HCT116 (cell line): ENCODE measurements at regions of chr10 and their contacts with region 1.

Region 1: GRCh38 chr10:133307776-133308420 is 774 bp downstream of the TUBGCP2 start:
- DNase-seq: no peak
- ATAC-seq: peak; percentile 56
- H3K4me3 ChIP-seq: peak overlapping the region; percentile 78 to 89
- H3K27ac ChIP-seq: peak overlapping the region; percentile 86
- H3K4me1 ChIP-seq: peaks cover 2 to 15% of the 10 kb centered on the region in 2 experiments; a peak in 2 of 4 replicates
- H3K27me3 ChIP-seq: no peaks in the 10 kb centered on the region
- CTCF ChIP-seq: peak; percentile 53 to 68 (median 62); a peak in 5 of 6 replicates
- POLR2A ChIP-seq: no peak
- RAD21 ChIP-seq: no peak

Region 2: DNA sequence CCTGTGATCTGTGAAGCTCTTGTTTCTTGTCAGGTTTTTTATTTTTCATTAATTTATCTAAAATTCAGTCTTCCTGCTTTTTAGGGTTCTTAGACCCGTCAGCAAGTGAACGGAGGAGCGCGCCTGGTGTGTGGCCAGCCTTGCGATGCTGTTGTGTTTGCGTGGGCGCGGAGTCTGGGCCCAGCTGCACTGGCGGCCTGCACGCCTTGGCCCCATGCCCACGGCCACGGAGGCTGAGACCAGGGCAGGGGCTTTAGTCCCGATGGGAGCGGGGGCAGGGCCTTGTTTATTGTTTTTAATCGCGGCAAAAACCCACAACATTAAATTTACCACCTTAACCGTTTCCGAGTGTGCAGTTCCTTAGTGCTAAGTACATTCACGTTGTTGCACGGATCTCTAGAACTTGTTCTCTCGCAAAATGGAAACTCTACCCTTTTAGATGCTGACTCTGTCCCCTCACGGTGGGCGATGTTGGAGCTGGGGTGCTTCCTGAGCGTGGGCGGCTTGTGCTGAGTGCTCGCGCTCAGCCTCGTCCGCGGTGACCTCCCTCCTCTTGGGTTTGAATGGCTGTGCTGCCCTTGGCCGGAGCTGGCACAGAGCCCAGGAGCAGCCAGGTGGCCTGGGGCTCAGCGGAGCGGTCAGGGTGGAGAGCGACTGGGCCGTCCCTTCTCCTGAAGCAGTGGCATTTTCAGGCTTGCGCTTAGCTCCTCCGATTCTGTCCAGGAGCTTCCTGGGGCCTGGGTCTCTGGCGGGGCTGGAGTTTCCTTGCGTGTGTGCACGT is 701.2 kb before region 1 on chr10:
- CTCF ChIA-PET with region 1: no interaction called
- POLR2A ChIA-PET with region 1: no interaction called
- RAD21 ChIA-PET with region 1: no interaction called
- intact Hi-C with region 1: no loop called
- DNase-seq: no peak
- ATAC-seq: no peak
- H3K4me3 ChIP-seq: no peak overlapping the region
- H3K27ac ChIP-seq: no peak overlapping the region
- H3K4me1 ChIP-seq: peaks cover 0 to 14% of the 10 kb centered on the region in 2 experiments; a peak in 2 of 4 replicates
- H3K27me3 ChIP-seq: no peaks in the 10 kb centered on the region
- CTCF ChIP-seq: no peak
- POLR2A ChIP-seq: no peak
- RAD21 ChIP-seq: no peak

Region 3: DNA sequence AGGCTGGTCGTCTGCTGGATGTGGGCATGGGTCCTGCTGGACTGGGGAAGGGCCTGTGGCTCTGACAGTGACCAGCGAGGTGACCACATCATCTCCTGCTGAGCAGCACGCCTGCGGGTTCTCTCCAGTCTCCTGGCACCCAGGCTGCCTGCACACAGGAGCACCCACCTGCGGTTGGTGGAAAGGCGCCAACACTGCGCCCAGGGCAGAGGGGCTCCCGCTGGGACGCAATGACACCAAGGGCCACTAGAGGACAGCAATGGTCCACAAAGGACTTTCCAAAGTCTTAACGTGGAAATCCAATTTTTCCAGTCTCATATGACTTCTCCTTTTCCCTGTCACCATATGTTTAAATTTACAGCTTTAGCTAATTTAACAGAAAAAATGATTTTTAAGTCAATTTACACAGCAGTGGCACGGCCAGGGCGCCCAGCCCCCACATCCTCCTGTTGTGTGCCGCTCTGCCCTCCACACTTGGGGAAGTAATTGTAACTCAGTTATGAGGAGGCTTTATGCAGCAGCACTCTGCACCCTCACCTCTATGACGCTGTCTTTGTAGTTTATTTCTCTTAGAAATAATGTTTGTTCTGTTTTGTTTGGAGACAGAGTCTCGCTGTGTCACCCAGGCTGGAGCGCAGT is 403.6 kb before region 1 on chr10:
- CTCF ChIA-PET with region 1: no interaction called
- POLR2A ChIA-PET with region 1: no interaction called
- RAD21 ChIA-PET with region 1: no interaction called
- intact Hi-C with region 1: loop called (anchors 2 kb)
- DNase-seq: peak; percentile 29
- ATAC-seq: peak; percentile 85
- H3K4me3 ChIP-seq: no peak overlapping the region
- H3K27ac ChIP-seq: no peak overlapping the region
- H3K4me1 ChIP-seq: peaks cover 11 to 18% of the 10 kb centered on the region in 2 experiments; a peak in 3 of 4 replicates
- H3K27me3 ChIP-seq: no peaks in the 10 kb centered on the region
- CTCF ChIP-seq: peak; percentile 69 to 75 (median 71)
- POLR2A ChIP-seq: no peak
- RAD21 ChIP-seq: peak; percentile 80

Region 4: DNA sequence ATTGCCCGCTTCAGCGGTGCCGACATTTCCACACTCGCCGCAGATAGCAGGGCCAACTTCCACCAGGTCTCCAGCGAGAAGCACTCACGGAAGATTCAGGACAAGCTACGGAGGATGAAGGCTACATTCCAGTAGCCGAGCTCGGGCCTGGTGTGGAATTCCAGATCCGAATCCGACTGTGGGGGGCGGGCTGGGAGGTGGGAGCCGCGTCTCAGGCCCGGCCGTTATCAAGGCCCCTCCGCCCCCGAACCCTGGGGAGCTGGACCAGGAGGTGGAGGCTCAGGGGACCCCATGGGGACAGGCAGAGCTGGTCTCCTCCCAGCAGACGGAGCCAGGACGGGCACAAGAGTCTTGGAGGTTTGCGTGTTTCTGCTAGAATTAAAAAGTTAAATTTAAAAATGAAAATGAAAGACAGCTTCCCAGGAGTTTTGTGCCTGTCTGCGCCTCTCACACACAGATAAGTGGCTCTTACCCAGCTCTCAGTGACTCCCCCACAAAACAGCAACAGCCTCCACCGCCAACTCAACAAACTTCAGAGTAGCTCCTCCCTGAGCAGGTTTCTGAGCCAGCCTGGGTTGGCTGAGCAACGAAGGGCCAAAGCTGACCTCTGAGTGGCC is 83.0 kb before region 1 on chr10:
- CTCF ChIA-PET with region 1: no interaction called
- POLR2A ChIA-PET with region 1: no interaction called
- RAD21 ChIA-PET with region 1: no interaction called
- intact Hi-C with region 1: no loop called
- DNase-seq: no peak
- ATAC-seq: no peak
- H3K4me3 ChIP-seq: no peak overlapping the region
- H3K27ac ChIP-seq: no peak overlapping the region
- H3K4me1 ChIP-seq: no peaks in the 10 kb centered on the region
- H3K27me3 ChIP-seq: no peaks in the 10 kb centered on the region
- CTCF ChIP-seq: no peak
- POLR2A ChIP-seq: no peak
- RAD21 ChIP-seq: no peak

Region 5: GRCh38 chr10:133394064-133394663 is 86.3 kb after region 1 on chr10 and contains the start of gene MTG1:
- CTCF ChIA-PET with region 1: no interaction called
- POLR2A ChIA-PET with region 1: no interaction called
- RAD21 ChIA-PET with region 1: no interaction called
- intact Hi-C with region 1: no loop called
- DNase-seq: peak; percentile 70
- ATAC-seq: peak; percentile 95
- H3K4me3 ChIP-seq: peak within 1 kb of the TSS; percentile 81 to 88
- H3K27ac ChIP-seq: peak within 1 kb of the TSS; percentile 80
- H3K4me1 ChIP-seq: peaks cover 2 to 11% of the 10 kb centered on the region in 2 experiments
- H3K27me3 ChIP-seq: no peaks in the 10 kb centered on the region
- CTCF ChIP-seq: no peak
- POLR2A ChIP-seq: peak; percentile 57
- RAD21 ChIP-seq: no peak
- total RNA-seq, gene MTG1: 23.1 TPM